Heart right ventricle (tissue), 16 donors: ENCODE measurements at regions of chr17 and their contacts with region 1.

Region 1: GRCh38 chr17:4498461-4499397 is at the start of gene SPNS2:
- DNase-seq: peak; percentile 62 to 77
- ATAC-seq: peak; percentile 84 to 90 (median 88)
- H3K4me3 ChIP-seq: peak within 1 kb of the TSS; percentile 55 to 67 (median 60)
- H3K27ac ChIP-seq: peak within 1 kb of the TSS; percentile 11 to 85 (median 78)
- H3K4me1 ChIP-seq: peaks cover 7 to 52% (median 35%) of the 10 kb centered on the region in 9 donors
- H3K27me3 ChIP-seq: peaks cover 0 to 40% (median 0%) of the 10 kb centered on the region in 7 donors
- CTCF ChIP-seq: peak in 1 of 9 donors; percentile 21
- total RNA-seq, gene SPNS2: 4.5 to 19.9 (median 8.9) TPM

Region 2: GRCh38 chr17:4444782-4445473 is 53.8 kb before region 1 on chr17:
- intact Hi-C with region 1: loop called in 1 of 10 experiments (anchors 5 kb)
- DNase-seq: peak; percentile 71 to 83
- ATAC-seq: peak; percentile 68 to 95 (median 87)
- H3K4me3 ChIP-seq: no peak overlapping the region
- H3K27ac ChIP-seq: peak overlapping the region in 8 of 10 donors; percentile 26 to 83 (median 65)
- H3K4me1 ChIP-seq: peaks cover 4 to 50% (median 25%) of the 10 kb centered on the region in 9 donors
- H3K27me3 ChIP-seq: no peaks in the 10 kb centered on the region
- CTCF ChIP-seq: no peak

Region 3: GRCh38 chr17:4534026-4534914 is 35.5 kb after region 1 on chr17:
- intact Hi-C with region 1: loop called in 1 of 10 experiments (anchors 5 kb)
- DNase-seq: peak in 1 of 2 donors; percentile 49
- ATAC-seq: peak in 6 of 8 donors; percentile 7 to 16 (median 11)
- H3K4me3 ChIP-seq: no peak overlapping the region
- H3K27ac ChIP-seq: peak overlapping the region; percentile 41 to 88 (median 64)
- H3K4me1 ChIP-seq: peaks cover 27 to 100% (median 90%) of the 10 kb centered on the region in 9 donors
- H3K27me3 ChIP-seq: no peaks in the 10 kb centered on the region
- CTCF ChIP-seq: peak in 1 of 9 donors; percentile 15

Region 4: GRCh38 chr17:4554997-4555799 is 56.5 kb after region 1 on chr17 and contains the start of gene MYBBP1A:
- intact Hi-C with region 1: loop called in 1 of 10 experiments (anchors 10 kb)
- DNase-seq: peak; percentile 97 to 98
- ATAC-seq: peak; percentile 89 to 98 (median 96)
- H3K4me3 ChIP-seq: peak within 1 kb of the TSS; percentile 44 to 96 (median 78)
- H3K27ac ChIP-seq: peak within 1 kb of the TSS; percentile 49 to 92 (median 88)
- H3K4me1 ChIP-seq: peaks cover 7 to 24% (median 21%) of the 10 kb centered on the region in 9 donors
- H3K27me3 ChIP-seq: no peaks in the 10 kb centered on the region
- CTCF ChIP-seq: peak in 7 of 9 donors; percentile 2 to 52 (median 39)
- total RNA-seq, gene MYBBP1A: 18.7 to 30.3 (median 21.7) TPM